ENCODE measurements at regions of chr19 and their contacts with region 1.

Region 1: GRCh38 chr19:41872775-41873647 is 4.1 kb upstream of the CD79A start:
- DNase-seq: peak; percentile 50 to 81 (median 66)
- ATAC-seq: no peak
- H3K4me3 Mint-ChIP-seq: peak overlapping the region; percentile 45 to 83 (median 59)
- H3K27ac Mint-ChIP-seq: peak overlapping the region; percentile 89 to 100 (median 98)
- H3K4me1 Mint-ChIP-seq: peaks cover 27 to 94% (median 82%) of the 10 kb centered on the region in 4 donors
- H3K27me3 Mint-ChIP-seq: no peaks in the 10 kb centered on the region

Region 2: DNA sequence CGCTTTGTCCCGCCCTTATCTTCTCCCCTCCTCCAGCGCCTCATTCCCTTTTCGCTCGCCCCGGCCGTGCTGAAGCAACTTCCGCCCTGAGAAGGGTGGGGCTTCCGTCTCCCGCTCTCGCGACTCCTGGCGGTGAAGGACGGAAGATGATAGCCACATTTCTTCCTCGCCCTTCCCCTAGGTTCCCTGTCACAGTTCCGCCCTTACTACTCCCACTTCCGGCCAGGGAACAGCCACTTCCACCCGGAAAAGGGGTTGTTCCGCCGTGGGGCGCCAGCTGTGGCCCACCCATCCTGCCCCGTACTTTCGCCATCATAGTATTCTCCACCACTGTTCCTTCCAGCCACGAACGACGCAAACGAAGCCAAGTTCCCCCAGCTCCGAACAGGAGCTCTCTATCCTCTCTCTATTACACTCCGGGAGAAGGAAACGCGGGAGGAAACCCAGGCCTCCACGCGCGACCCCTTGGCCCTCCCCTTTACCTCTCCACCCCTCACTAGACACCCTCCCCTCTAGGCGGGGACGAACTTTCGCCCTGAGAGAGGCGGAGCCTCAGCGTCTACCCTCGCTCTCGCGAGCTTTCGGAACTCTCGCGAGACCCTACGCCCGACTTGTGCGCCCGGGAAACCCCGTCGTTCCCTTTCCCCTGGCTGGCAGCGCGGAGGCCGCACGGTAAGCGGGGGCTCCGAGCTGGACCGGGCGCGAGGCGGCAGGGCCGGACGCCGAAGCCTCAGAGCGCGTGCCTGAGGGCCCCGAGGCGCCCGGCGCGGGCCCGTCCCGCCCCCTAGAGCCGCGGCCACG is 13.2 kb before region 1 on chr19 and contains the start of gene RPS19:
- POLR2A ChIA-PET with region 1: interaction called, 187 read pairs
- DNase-seq: peak; percentile 94 to 99 (median 98)
- ATAC-seq: peak; percentile 82 to 86
- H3K4me3 Mint-ChIP-seq: peak within 1 kb of the TSS; percentile 80 to 100 (median 95)
- H3K27ac Mint-ChIP-seq: peak within 1 kb of the TSS; percentile 84 to 99 (median 97)
- H3K4me1 Mint-ChIP-seq: peaks cover 28 to 52% (median 44%) of the 10 kb centered on the region in 4 donors
- H3K27me3 Mint-ChIP-seq: no peaks in the 10 kb centered on the region
- polyA plus RNA-seq, gene RPS19: 6,905 to 8,825 (median 8,505) TPM

Region 3: GRCh38 chr19:41893899-41894298 is 20.9 kb after region 1 on chr19:
- POLR2A ChIA-PET with region 1: interaction called, 819 read pairs
- DNase-seq: peak in 1 of 10 donors; percentile 42
- ATAC-seq: peak; percentile 19 to 41
- H3K4me3 Mint-ChIP-seq: peak overlapping the region in 9 of 10 donors; percentile 53 to 86 (median 74)
- H3K27ac Mint-ChIP-seq: peak overlapping the region; percentile 78 to 98 (median 90)
- H3K4me1 Mint-ChIP-seq: peaks cover 37 to 81% (median 75%) of the 10 kb centered on the region in 4 donors
- H3K27me3 Mint-ChIP-seq: no peaks in the 10 kb centered on the region

Region 4: GRCh38 chr19:41928221-41928683 is 55.2 kb after region 1 on chr19 and contains the start of gene ERFL:
- POLR2A ChIA-PET with region 1: interaction called, 26 read pairs
- DNase-seq: peak in 1 of 10 donors; percentile 34
- ATAC-seq: peak; percentile 37 to 47
- H3K4me3 Mint-ChIP-seq: peak within 1 kb of the TSS in 7 of 10 donors; percentile 86 to 97 (median 94)
- H3K27ac Mint-ChIP-seq: peak within 1 kb of the TSS in 9 of 10 donors; percentile 83 to 94 (median 91)
- H3K4me1 Mint-ChIP-seq: peaks cover 24 to 43% (median 37%) of the 10 kb centered on the region in 4 donors
- H3K27me3 Mint-ChIP-seq: peaks cover 0 to 5% (median 0%) of the 10 kb centered on the region in 5 donors
- polyA plus RNA-seq, gene ERFL: not detected

Region 5: GRCh38 chr19:41951686-41952172 is 78.7 kb after region 1 on chr19:
- POLR2A ChIA-PET with region 1: interaction called, 114 read pairs
- DNase-seq: peak; percentile 69 to 93 (median 84)
- ATAC-seq: peak; percentile 86 to 88
- H3K4me3 Mint-ChIP-seq: peak overlapping the region in 4 of 10 donors; percentile 22 to 66 (median 43)
- H3K27ac Mint-ChIP-seq: peak overlapping the region; percentile 57 to 97 (median 86)
- H3K4me1 Mint-ChIP-seq: peaks cover 17 to 35% (median 26%) of the 10 kb centered on the region in 4 donors
- H3K27me3 Mint-ChIP-seq: no peaks in the 10 kb centered on the region

Region 6: DNA sequence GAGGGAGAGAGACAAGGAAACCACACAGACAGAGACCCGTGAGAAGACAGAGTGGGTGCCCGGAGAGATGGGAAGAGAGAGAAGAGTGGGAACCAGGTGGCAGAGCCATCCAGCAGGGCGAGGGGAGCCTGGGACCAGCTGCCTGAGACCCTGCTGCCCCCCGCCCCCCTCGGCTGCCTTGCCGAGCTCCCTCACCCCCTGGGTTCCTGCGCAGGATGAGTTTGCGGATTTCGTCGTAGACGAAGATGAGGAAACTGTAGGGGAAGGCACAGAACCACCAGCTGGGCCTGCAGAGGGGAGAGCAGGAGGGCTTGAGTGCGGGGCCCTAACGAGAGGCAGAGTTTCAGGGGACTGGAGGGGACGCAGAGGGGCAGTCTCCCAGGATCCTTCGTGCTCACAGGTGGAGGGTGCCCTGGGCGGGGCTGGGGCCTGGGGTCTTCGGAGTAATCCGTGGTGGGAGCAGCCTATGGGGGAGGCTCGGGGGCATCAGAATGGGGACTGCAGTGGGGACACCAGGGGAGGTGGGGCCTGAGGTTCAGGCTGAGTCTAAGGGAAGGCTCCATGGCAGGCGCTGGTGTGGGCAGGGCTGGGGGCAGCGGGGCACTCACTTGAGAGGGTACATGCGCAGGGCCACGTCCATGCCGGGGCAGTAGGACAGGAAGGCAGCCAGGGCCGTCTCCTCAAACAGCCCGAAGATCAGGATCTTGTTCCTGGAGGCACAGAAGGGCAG is 94.2 kb after region 1 on chr19:
- POLR2A ChIA-PET with region 1: no interaction called
- DNase-seq: no peak
- ATAC-seq: no peak
- H3K4me3 Mint-ChIP-seq: no peak overlapping the region
- H3K27ac Mint-ChIP-seq: no peak overlapping the region
- H3K4me1 Mint-ChIP-seq: peaks cover 0 to 5% (median 3%) of the 10 kb centered on the region in 4 donors
- H3K27me3 Mint-ChIP-seq: no peaks in the 10 kb centered on the region